ENCODE measurements at regions of chr21 and their contacts with region 1.

Region 1: DNA sequence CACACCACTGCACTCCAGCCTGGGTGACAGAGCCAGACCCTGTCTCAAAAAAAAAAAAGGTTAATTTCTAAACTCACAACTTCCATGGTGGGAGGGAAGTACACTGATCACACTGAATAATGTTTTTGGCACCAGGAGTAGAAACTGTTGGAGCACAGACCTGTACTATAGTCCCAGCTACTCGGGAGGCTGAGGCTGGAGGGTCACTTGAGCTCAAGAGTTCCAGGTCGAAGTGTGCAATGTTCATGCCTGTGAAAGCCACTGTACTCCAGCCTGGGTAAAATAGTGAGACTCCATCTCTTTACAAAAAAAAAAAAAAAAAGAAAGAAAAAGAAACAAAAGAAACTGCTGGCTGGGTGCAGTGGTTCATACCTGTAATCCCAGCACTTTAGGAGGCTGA is 35.3 kb downstream of the TMEM50B start:
- DNase-seq: no peak
- ATAC-seq: no peak
- H3K4me3 Mint-ChIP-seq: no peak overlapping the region
- H3K27ac Mint-ChIP-seq: no peak overlapping the region
- H3K4me1 Mint-ChIP-seq: peaks cover 7% of the 10 kb centered on the region
- H3K27me3 Mint-ChIP-seq: no peaks in the 10 kb centered on the region
- CTCF ChIP-seq: no peak

Region 2: DNA sequence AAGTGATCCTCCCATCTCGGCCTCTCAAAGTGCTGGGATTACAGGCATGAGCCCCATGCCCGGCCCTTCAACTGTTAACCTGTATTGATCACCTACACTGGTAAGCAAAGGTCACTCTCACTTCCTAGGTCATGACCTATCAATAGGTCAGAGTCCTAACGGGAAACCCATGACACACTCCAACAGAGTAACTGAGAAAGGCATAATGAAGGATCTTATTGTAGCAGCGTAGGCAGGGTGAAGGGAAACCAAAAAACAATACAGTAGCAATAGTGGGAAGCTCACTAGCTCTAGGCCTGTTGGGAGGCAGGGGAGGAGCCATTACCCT is 139.2 kb before region 1 on chr21:
- CTCF ChIA-PET with region 1: no interaction called
- POLR2A ChIA-PET with region 1: no interaction called
- intact Hi-C with region 1: no loop called
- DNase-seq: no peak
- ATAC-seq: no peak
- H3K4me3 Mint-ChIP-seq: no peak overlapping the region
- H3K27ac Mint-ChIP-seq: no peak overlapping the region
- H3K4me1 Mint-ChIP-seq: peaks cover 19% of the 10 kb centered on the region
- H3K27me3 Mint-ChIP-seq: no peaks in the 10 kb centered on the region
- CTCF ChIP-seq: no peak

Region 3: DNA sequence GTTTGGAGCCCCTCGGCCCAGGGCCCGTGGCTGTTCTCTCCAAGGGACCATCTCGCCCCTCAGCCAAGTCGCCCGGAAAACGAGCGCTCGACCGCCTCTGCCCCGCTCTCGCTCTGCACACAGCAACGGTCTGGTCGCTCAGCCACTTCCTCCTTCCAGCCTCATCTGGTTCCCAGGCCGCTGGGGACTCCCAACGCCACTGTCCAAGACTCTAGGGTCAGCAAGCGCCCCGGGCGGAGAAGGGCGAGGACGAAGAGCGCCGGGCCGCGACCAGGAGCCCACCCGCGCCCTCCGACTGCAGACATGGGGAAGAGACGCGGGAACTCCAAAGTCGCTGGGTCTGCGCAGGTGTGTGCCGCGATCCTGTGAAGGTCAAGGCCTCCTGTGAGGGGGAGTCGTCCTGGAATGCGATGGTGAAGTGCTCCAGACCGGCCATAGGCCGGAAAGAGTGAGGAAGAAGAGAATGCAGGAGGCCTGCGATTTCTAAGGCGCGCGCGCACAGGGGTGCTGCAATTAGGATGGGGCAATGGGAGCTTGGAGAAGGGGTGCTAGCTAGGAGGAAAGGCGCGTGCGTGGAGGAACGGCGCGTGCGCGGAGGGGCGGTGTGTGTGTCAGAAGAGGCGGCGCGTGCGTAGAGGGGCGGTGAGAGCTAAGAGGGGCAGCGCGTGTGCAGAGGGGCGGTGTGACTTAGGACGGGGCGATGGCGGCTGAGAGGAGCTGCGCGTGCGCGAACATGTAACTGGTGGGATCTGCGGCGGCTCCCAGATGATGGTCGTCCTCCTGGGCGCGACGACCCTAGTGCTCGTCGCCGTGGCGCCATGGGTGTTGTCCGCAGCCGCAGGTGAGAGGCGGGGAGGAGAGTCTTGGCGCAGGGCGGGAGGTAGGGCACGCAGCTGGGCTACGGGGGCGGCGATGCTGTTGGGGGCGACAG is 119.9 kb before region 1 on chr21 and contains the start of gene IFNAR1:
- CTCF ChIA-PET with region 1: interaction called, 12 read pairs
- POLR2A ChIA-PET with region 1: interaction called, 3 read pairs
- intact Hi-C with region 1: no loop called
- DNase-seq: peak; percentile 100
- ATAC-seq: peak; percentile 93
- H3K4me3 Mint-ChIP-seq: no peak within 1 kb of the TSS
- H3K27ac Mint-ChIP-seq: no peak within 1 kb of the TSS
- H3K4me1 Mint-ChIP-seq: peaks cover 27% of the 10 kb centered on the region
- H3K27me3 Mint-ChIP-seq: no peaks in the 10 kb centered on the region
- CTCF ChIP-seq: no peak
- total RNA-seq, gene IFNAR1: 25.6 to 30.3 TPM

Region 4: GRCh38 chr21:33348706-33349105 is 95.8 kb before region 1 on chr21:
- CTCF ChIA-PET with region 1: interaction called, 21 read pairs
- POLR2A ChIA-PET with region 1: no interaction called
- intact Hi-C with region 1: no loop called
- DNase-seq: no peak
- ATAC-seq: no peak
- H3K4me3 Mint-ChIP-seq: no peak overlapping the region
- H3K27ac Mint-ChIP-seq: no peak overlapping the region
- H3K4me1 Mint-ChIP-seq: peaks cover 10% of the 10 kb centered on the region
- H3K27me3 Mint-ChIP-seq: no peaks in the 10 kb centered on the region
- CTCF ChIP-seq: no peak

Region 5: GRCh38 chr21:33380483-33380998 is 64.0 kb before region 1 on chr21:
- CTCF ChIA-PET with region 1: interaction called, 29 read pairs
- POLR2A ChIA-PET with region 1: interaction called, 3 read pairs
- intact Hi-C with region 1: no loop called
- DNase-seq: peak; percentile 99
- ATAC-seq: peak; percentile 77
- H3K4me3 Mint-ChIP-seq: peak overlapping the region; percentile 39
- H3K27ac Mint-ChIP-seq: peak overlapping the region; percentile 79
- H3K4me1 Mint-ChIP-seq: peaks cover 61% of the 10 kb centered on the region
- H3K27me3 Mint-ChIP-seq: peaks cover 2% of the 10 kb centered on the region
- CTCF ChIP-seq: no peak

Region 6: GRCh38 chr21:33386222-33386784 is 58.2 kb before region 1 on chr21:
- CTCF ChIA-PET with region 1: interaction called, 17 read pairs
- POLR2A ChIA-PET with region 1: interaction called, 3 read pairs
- intact Hi-C with region 1: no loop called
- DNase-seq: no peak
- ATAC-seq: no peak
- H3K4me3 Mint-ChIP-seq: no peak overlapping the region
- H3K27ac Mint-ChIP-seq: no peak overlapping the region
- H3K4me1 Mint-ChIP-seq: peaks cover 40% of the 10 kb centered on the region
- H3K27me3 Mint-ChIP-seq: peaks cover 21% of the 10 kb centered on the region
- CTCF ChIP-seq: peak; percentile 23

Region 7: GRCh38 chr21:33403779-33404585 is 40.5 kb before region 1 on chr21:
- CTCF ChIA-PET with region 1: interaction called, 12 read pairs
- POLR2A ChIA-PET with region 1: no interaction called
- intact Hi-C with region 1: loop called (anchors 5 kb)
- DNase-seq: peak; percentile 32
- ATAC-seq: peak; percentile 33
- H3K4me3 Mint-ChIP-seq: peak overlapping the region; percentile 78
- H3K27ac Mint-ChIP-seq: peak overlapping the region; percentile 82
- H3K4me1 Mint-ChIP-seq: peaks cover 34% of the 10 kb centered on the region
- H3K27me3 Mint-ChIP-seq: peaks cover 11% of the 10 kb centered on the region
- CTCF ChIP-seq: no peak

Region 8: DNA sequence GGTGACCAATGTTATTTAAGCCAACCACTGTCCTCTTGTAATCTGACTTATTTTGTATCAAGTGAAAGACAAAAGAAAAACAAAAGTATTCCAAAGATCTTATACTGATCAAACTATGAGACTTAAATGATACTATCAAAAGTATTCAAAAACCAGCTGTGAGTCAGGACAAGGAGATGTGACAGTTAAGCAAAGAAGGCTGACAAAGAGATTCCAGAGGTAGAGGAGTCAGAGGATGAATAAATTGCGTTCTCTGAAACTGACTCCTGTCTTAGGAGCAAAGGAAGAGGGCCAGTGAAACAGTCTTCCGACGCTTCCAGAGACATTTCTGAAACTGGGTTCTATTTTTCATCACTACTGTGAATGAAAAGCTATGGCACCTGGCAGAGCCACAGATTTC is 14.4 kb after region 1 on chr21:
- CTCF ChIA-PET with region 1: interaction called, 12 read pairs
- POLR2A ChIA-PET with region 1: interaction called, 3 read pairs
- intact Hi-C with region 1: no loop called
- DNase-seq: no peak
- ATAC-seq: no peak
- H3K4me3 Mint-ChIP-seq: no peak overlapping the region
- H3K27ac Mint-ChIP-seq: no peak overlapping the region
- H3K4me1 Mint-ChIP-seq: no peaks in the 10 kb centered on the region
- H3K27me3 Mint-ChIP-seq: no peaks in the 10 kb centered on the region
- CTCF ChIP-seq: no peak

Region 9: GRCh38 chr21:33473344-33473743 is 28.8 kb after region 1 on chr21:
- CTCF ChIA-PET with region 1: no interaction called
- POLR2A ChIA-PET with region 1: no interaction called
- intact Hi-C with region 1: no loop called
- DNase-seq: no peak
- ATAC-seq: no peak
- H3K4me3 Mint-ChIP-seq: no peak overlapping the region
- H3K27ac Mint-ChIP-seq: no peak overlapping the region
- H3K4me1 Mint-ChIP-seq: peaks cover 28% of the 10 kb centered on the region
- H3K27me3 Mint-ChIP-seq: no peaks in the 10 kb centered on the region
- CTCF ChIP-seq: no peak